CD4-positive, alpha-beta memory T cell (primary cell): ENCODE measurements at regions of chr6 and their contacts with region 1.

Region 1: DNA sequence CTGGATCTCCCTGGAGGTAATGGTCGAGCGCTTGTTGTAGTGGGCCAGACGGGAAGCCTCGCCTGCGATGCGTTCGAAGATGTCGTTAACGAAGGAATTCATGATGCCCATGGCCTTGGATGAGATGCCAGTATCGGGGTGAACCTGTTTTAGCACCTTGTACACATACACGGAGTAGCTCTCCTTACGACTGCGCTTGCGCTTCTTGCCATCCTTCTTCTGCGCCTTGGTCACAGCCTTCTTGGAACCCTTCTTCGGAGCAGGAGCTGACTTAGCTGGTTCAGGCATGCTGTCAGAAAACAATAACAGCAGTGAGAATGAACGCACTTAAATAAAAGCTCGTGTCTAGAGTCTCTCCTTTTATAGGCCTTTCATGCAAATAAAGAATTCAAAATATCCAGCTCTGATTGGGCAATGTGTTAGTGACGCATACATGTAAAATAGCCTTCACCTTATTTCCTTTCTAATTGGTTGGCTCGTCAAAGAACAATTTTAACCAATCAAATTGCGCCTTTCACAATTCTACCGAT is 129.2 kb downstream of the HFE start:
- DNase-seq: peak; percentile 88 to 96 (median 94)
- H3K4me3 ChIP-seq: peak overlapping the region; percentile 75 to 85
- H3K4me3 Mint-ChIP-seq: no peak overlapping the region
- H3K27ac ChIP-seq: peak overlapping the region; percentile 82
- H3K27ac Mint-ChIP-seq: no peak overlapping the region
- H3K4me1 ChIP-seq: peaks cover 26% of the 10 kb centered on the region
- H3K4me1 Mint-ChIP-seq: peaks cover 0 to 5% (median 2%) of the 10 kb centered on the region in 4 donors
- H3K27me3 ChIP-seq: no peaks in the 10 kb centered on the region
- H3K27me3 Mint-ChIP-seq: no peaks in the 10 kb centered on the region

Region 2: DNA sequence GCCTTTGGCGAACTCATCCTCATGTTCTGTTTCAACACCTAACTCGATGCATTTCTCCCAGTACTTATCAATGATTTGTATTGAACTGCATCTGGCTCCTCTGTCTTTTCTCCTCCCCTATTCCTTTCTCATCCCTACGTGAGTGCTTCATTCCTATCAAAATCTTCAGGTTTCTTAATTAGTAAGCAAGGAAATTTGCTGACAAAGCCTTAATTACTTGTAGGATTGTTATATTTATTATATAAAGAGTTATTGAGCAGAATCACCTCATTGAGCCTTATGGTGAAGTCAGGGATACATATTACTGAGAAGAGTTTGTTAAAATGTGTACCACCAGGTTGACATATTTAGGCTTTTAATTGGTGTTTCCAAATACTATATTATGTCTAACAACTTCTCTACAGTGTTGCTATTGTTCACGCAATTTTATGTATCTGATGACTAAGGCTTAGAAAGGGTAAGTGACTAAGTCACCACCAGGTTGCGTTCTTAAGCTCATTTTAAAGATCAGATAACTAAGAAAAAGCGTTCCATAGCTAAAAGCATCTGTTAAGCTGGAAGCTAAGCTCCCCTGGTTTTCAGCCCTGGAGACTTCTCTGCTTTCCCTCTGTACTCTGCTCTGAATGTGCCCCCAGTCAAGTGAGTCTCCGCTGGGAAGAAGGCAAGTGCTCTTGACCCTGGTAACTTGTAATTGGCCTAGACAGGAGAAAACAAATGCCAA is 545.5 kb before region 1 on chr6:
- CTCF ChIA-PET with region 1: no interaction called
- POLR2A ChIA-PET with region 1: no interaction called
- intact Hi-C with region 1: no loop called
- DNase-seq: no peak
- H3K4me3 ChIP-seq: no peak overlapping the region
- H3K4me3 Mint-ChIP-seq: no peak overlapping the region
- H3K27ac ChIP-seq: no peak overlapping the region
- H3K27ac Mint-ChIP-seq: no peak overlapping the region
- H3K4me1 ChIP-seq: no peaks in the 10 kb centered on the region
- H3K4me1 Mint-ChIP-seq: no peaks in the 10 kb centered on the region
- H3K27me3 ChIP-seq: no peaks in the 10 kb centered on the region
- H3K27me3 Mint-ChIP-seq: peaks cover 11 to 12% of the 10 kb centered on the region in 2 donors

Region 3: DNA sequence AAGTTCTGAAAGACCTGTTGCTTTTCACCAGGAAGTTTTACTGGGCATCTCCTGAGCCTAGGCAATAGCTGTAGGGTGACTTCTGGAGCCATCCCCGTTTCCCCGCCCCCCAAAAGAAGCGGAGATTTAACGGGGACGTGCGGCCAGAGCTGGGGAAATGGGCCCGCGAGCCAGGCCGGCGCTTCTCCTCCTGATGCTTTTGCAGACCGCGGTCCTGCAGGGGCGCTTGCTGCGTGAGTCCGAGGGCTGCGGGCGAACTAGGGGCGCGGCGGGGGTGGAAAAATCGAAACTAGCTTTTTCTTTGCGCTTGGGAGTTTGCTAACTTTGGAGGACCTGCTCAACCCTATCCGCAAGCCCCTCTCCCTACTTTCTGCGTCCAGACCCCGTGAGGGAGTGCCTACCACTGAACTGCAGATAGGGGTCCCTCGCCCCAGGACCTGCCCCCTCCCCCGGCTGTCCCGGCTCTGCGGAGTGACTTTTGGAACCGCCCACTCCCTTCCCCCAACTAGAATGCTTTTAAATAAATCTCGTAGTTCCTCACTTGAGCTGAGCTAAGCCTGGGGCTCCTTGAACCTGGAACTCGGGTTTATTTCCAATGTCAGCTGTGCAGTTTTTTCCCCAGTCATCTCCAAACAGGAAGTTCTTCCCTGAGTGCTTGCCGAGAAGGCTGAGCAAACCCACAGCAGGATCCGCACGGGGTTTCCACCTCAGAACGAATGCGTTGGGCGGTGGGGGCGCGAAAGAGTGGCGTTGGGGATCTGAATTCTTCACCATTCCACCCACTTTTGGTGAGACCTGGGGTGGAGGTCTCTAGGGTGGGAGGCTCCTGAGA is 128.9 kb before region 1 on chr6 and contains the start of gene HFE:
- CTCF ChIA-PET with region 1: no interaction called
- POLR2A ChIA-PET with region 1: interaction called, 13 read pairs
- intact Hi-C with region 1: no loop called
- DNase-seq: peak in 4 of 5 donors; percentile 24 to 43 (median 26)
- H3K4me3 ChIP-seq: peak within 1 kb of the TSS; percentile 67 to 79
- H3K4me3 Mint-ChIP-seq: peak within 1 kb of the TSS; percentile 77 to 93 (median 90)
- H3K27ac ChIP-seq: peak within 1 kb of the TSS; percentile 68
- H3K27ac Mint-ChIP-seq: peak within 1 kb of the TSS; percentile 71 to 94 (median 90)
- H3K4me1 ChIP-seq: peaks cover 36% of the 10 kb centered on the region
- H3K4me1 Mint-ChIP-seq: peaks cover 20 to 41% (median 28%) of the 10 kb centered on the region in 4 donors
- H3K27me3 ChIP-seq: no peaks in the 10 kb centered on the region
- H3K27me3 Mint-ChIP-seq: no peaks in the 10 kb centered on the region
- total RNA-seq, gene HFE: 3.5 to 4.2 TPM

Region 4: GRCh38 chr6:26196846-26197648 is 19.4 kb before region 1 on chr6:
- CTCF ChIA-PET with region 1: interaction called, 63 read pairs
- POLR2A ChIA-PET with region 1: interaction called, 1,953 read pairs
- intact Hi-C with region 1: loop called (anchors 1 kb)
- DNase-seq: peak; percentile 92 to 93 (median 92)
- H3K4me3 ChIP-seq: peak overlapping the region; percentile 83 to 97
- H3K4me3 Mint-ChIP-seq: peak overlapping the region; percentile 94 to 99 (median 97)
- H3K27ac ChIP-seq: peak overlapping the region; percentile 84
- H3K27ac Mint-ChIP-seq: peak overlapping the region; percentile 96 to 100 (median 98)
- H3K4me1 ChIP-seq: peaks cover 43% of the 10 kb centered on the region
- H3K4me1 Mint-ChIP-seq: peaks cover 23 to 57% (median 41%) of the 10 kb centered on the region in 4 donors
- H3K27me3 ChIP-seq: no peaks in the 10 kb centered on the region
- H3K27me3 Mint-ChIP-seq: no peaks in the 10 kb centered on the region

Region 5: DNA sequence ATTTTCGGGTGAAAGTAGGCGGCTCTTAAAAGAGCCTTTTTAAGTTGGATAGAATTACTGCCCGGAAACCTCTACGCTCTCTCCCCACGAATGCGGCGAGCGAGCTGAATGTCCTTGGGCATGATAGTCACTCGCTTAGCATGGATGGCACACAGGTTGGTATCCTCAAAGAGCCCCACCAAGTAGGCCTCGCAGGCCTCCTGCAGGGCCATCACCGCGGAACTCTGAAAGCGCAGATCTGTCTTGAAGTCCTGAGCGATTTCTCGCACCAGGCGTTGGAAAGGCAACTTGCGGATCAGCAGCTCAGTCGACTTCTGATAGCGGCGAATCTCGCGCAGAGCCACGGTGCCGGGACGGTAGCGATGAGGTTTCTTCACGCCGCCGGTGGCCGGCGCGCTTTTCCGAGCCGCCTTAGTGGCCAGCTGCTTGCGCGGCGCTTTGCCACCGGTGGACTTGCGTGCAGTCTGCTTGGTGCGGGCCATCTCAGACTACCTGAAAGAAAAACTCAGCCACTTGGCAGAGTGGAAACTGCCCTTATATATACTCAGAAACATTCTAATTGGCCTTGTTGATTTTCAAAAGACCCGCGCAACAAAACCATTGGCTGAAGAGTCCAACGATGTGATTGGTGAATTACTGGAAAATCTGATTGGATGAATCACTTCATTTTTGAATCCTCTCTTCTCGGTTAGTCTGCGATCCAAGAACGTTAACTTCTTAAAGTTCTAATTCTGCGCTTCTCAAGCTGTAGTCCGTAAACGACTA is 54.7 kb after region 1 on chr6:
- CTCF ChIA-PET with region 1: interaction called, 41 read pairs
- POLR2A ChIA-PET with region 1: interaction called, 351 read pairs
- intact Hi-C with region 1: loop called (anchors 1 kb)
- DNase-seq: peak; percentile 84 to 87 (median 85)
- H3K4me3 ChIP-seq: peak overlapping the region; percentile 53 to 65
- H3K4me3 Mint-ChIP-seq: peak overlapping the region in 1 of 8 donors; percentile 85
- H3K27ac ChIP-seq: peak overlapping the region; percentile 83
- H3K27ac Mint-ChIP-seq: peak overlapping the region in 5 of 7 donors; percentile 68 to 97 (median 82)
- H3K4me1 ChIP-seq: peaks cover 31% of the 10 kb centered on the region
- H3K4me1 Mint-ChIP-seq: peaks cover 0 to 22% (median 15%) of the 10 kb centered on the region in 4 donors
- H3K27me3 ChIP-seq: no peaks in the 10 kb centered on the region
- H3K27me3 Mint-ChIP-seq: no peaks in the 10 kb centered on the region

Region 6: GRCh38 chr6:26568601-26569432 is 352.4 kb after region 1 on chr6:
- CTCF ChIA-PET with region 1: no interaction called
- POLR2A ChIA-PET with region 1: interaction called, 20 read pairs
- intact Hi-C with region 1: no loop called
- DNase-seq: peak; percentile 96 to 98 (median 97)
- H3K4me3 ChIP-seq: peak overlapping the region; percentile 74 to 82
- H3K4me3 Mint-ChIP-seq: peak overlapping the region; percentile 94 to 99 (median 96)
- H3K27ac ChIP-seq: peak overlapping the region; percentile 62
- H3K27ac Mint-ChIP-seq: peak overlapping the region; percentile 92 to 100 (median 98)
- H3K4me1 ChIP-seq: peaks cover 9% of the 10 kb centered on the region
- H3K4me1 Mint-ChIP-seq: peaks cover 17 to 34% (median 23%) of the 10 kb centered on the region in 4 donors
- H3K27me3 ChIP-seq: no peaks in the 10 kb centered on the region
- H3K27me3 Mint-ChIP-seq: peaks cover 0 to 10% of the 10 kb centered on the region in 2 donors

Region 7: GRCh38 chr6:27838058-27838944 is 1621.9 kb after region 1 on chr6:
- CTCF ChIA-PET with region 1: no interaction called
- POLR2A ChIA-PET with region 1: interaction called, 30 read pairs
- intact Hi-C with region 1: no loop called
- DNase-seq: peak; percentile 91 to 94 (median 92)
- H3K4me3 ChIP-seq: peak overlapping the region; percentile 63 to 67
- H3K4me3 Mint-ChIP-seq: no peak overlapping the region
- H3K27ac ChIP-seq: peak overlapping the region; percentile 93
- H3K27ac Mint-ChIP-seq: no peak overlapping the region
- H3K4me1 ChIP-seq: peaks cover 30% of the 10 kb centered on the region
- H3K4me1 Mint-ChIP-seq: peaks cover 6 to 20% (median 12%) of the 10 kb centered on the region in 4 donors
- H3K27me3 ChIP-seq: no peaks in the 10 kb centered on the region
- H3K27me3 Mint-ChIP-seq: peaks cover 2 to 3% of the 10 kb centered on the region in 2 donors